ENCODE measurements at regions of chr15 and their contacts with region 1.

Region 1: GRCh38 chr15:78437762-78438302 is at the start of gene IREB2:
- DNase-seq: peak; percentile 93 to 99 (median 96)
- ATAC-seq: peak; percentile 92 to 94 (median 93)
- H3K4me3 ChIP-seq: peak within 1 kb of the TSS; percentile 94 to 99
- H3K4me3 Mint-ChIP-seq: peak within 1 kb of the TSS; percentile 91 to 98 (median 95)
- H3K27ac ChIP-seq: peak within 1 kb of the TSS; percentile 90
- H3K27ac Mint-ChIP-seq: peak within 1 kb of the TSS; percentile 95 to 96
- H3K4me1 ChIP-seq: peaks cover 17 to 27% of the 10 kb centered on the region in 2 experiments
- H3K4me1 Mint-ChIP-seq: peaks cover 42 to 52% (median 45%) of the 10 kb centered on the region in 3 donors
- H3K27me3 ChIP-seq: no peaks in the 10 kb centered on the region
- H3K27me3 Mint-ChIP-seq: no peaks in the 10 kb centered on the region
- total RNA-seq, gene IREB2: 58.7 to 71.5 (median 65.1) TPM

Region 2: DNA sequence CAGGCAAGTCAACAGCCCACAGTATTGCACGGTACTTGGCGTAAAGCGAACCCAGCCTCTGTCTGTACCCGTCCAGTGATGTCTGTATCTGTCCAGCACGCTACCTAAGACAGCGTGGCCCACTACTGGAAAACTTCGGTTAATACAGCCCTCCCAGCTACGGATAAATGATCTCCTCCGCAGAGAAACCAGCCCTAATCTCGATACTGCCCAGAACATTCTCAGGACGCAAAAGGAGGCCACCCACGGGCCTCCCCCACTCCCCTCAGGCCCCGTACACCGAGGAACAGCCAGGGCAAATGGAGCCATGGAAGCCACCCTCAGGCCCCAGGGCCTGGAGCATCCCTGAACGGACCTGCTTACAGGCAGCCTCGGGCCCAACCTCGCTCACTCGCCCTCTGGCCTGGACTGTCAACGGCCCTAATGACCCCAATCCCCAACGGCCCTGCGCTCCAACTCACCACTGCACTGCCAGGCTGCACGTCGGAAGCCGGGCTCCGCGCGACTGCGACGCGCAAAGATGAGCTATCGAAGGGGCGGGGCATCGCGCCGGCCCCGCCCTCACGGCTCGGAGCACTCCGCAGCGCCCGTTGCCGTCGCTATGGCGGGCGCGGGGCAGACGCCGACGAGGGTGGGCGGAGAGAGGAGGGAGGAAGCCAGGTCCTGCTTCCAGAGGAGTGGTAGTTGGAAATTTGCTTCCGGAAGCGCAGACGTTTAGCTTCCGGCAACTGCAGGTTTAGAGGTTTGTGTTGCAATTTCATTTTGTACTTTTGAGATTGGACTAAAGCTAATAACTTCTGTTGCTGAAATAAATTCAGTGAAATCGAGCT is 138.5 kb before region 1 on chr15 and contains the start of gene SKIC8:
- CTCF ChIA-PET with region 1: interaction called in 1 of 2 experiments, 7 read pairs
- POLR2A ChIA-PET with region 1: interaction called in 1 of 2 experiments, 16 read pairs
- DNase-seq: peak; percentile 76 to 95 (median 86)
- ATAC-seq: peak; percentile 98 to 99 (median 98)
- H3K4me3 ChIP-seq: peak within 1 kb of the TSS; percentile 72 to 100
- H3K4me3 Mint-ChIP-seq: peak within 1 kb of the TSS; percentile 93 to 99 (median 98)
- H3K27ac ChIP-seq: peak within 1 kb of the TSS; percentile 57
- H3K27ac Mint-ChIP-seq: peak within 1 kb of the TSS; percentile 93
- H3K4me1 ChIP-seq: peaks cover 9 to 14% of the 10 kb centered on the region in 2 experiments
- H3K4me1 Mint-ChIP-seq: peaks cover 22 to 36% (median 28%) of the 10 kb centered on the region in 3 donors
- H3K27me3 ChIP-seq: peaks cover 0 to 7% of the 10 kb centered on the region in 2 experiments
- H3K27me3 Mint-ChIP-seq: no peaks in the 10 kb centered on the region
- total RNA-seq, gene SKIC8: 25.6 to 42.8 (median 33.5) TPM

Measured in T-cell (primary cell).